IMR-90 (cell line): ENCODE measurements at regions of chr11 and their contacts with region 1.

Region 1: DNA sequence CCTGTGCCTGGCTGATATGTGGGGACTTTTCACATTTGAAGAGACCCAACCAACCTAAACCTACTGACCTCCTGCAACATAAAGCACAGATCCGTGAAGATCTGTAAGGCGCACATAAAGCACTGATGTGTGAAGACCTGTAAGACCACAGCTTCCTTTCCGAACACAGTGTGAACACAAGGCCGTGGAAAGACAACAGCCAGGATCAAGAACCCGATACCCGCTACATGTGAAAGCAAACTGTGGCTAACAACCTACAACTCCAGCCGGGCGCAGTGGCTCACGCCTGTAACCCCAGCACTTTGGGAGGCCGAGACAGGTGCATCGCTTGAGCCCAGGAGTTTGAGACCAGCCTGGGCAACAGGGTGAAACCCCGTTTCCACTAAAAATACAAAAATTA is 17.6 kb upstream of the PPFIA1 start:
- DNase-seq: no peak
- ATAC-seq: no peak
- H3K4me3 ChIP-seq: no peak overlapping the region
- H3K27ac ChIP-seq: no peak overlapping the region
- H3K4me1 ChIP-seq: peaks cover 2% of the 10 kb centered on the region; the same call in 1 of the 2 replicates
- H3K27me3 ChIP-seq: peaks cover 16% of the 10 kb centered on the region
- CTCF ChIP-seq: no peak
- POLR2A ChIP-seq: no peak
- RAD21 ChIP-seq: no peak

Region 2: DNA sequence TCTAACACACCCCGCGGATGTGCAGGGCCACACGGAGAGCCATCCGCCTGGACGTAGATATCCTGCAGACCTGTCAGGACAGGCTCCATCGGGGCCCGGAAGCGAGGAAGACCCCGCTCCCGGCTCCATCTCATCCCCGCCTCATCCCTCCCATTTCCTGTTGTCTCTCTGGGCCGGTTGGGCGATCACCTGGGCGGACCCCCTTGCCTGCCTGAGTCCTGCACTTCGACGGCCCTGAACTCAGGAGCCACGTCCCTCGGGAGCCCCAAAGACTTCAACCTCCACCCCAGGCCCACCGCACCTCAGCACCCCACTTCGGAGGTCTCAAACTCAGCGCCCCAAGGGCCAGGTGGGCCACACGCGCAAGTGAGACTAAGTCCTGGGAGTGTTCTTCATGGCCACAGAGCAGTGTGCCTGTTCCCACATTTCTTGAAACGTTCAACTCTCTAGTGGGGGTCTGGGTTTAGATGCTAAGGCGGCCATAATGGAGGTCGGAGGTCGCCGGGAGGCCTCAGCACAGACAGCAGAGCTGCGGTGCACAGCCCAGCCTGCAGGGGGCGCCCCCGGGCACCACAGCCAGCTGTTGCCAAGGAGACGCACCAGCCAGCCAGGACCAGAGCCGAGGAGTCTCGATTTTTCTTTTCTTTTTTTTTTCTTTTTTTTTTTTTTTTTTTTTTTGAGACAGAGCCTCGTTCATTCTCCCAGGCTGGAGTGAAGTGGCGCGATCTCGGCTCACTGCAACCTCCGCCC is 75.7 kb before region 1 on chr11:
- CTCF ChIA-PET with region 1: no interaction called
- POLR2A ChIA-PET with region 1: no interaction called
- dilution Hi-C with region 1: no loop called
- in situ Hi-C with region 1: no loop called
- intact Hi-C with region 1: no loop called
- DNase-seq: no peak
- ATAC-seq: no peak
- H3K4me3 ChIP-seq: no peak overlapping the region
- H3K27ac ChIP-seq: no peak overlapping the region
- H3K4me1 ChIP-seq: no peaks in the 10 kb centered on the region
- H3K27me3 ChIP-seq: no peaks in the 10 kb centered on the region
- CTCF ChIP-seq: peak; percentile 58
- POLR2A ChIP-seq: no peak
- RAD21 ChIP-seq: no peak

Region 3: DNA sequence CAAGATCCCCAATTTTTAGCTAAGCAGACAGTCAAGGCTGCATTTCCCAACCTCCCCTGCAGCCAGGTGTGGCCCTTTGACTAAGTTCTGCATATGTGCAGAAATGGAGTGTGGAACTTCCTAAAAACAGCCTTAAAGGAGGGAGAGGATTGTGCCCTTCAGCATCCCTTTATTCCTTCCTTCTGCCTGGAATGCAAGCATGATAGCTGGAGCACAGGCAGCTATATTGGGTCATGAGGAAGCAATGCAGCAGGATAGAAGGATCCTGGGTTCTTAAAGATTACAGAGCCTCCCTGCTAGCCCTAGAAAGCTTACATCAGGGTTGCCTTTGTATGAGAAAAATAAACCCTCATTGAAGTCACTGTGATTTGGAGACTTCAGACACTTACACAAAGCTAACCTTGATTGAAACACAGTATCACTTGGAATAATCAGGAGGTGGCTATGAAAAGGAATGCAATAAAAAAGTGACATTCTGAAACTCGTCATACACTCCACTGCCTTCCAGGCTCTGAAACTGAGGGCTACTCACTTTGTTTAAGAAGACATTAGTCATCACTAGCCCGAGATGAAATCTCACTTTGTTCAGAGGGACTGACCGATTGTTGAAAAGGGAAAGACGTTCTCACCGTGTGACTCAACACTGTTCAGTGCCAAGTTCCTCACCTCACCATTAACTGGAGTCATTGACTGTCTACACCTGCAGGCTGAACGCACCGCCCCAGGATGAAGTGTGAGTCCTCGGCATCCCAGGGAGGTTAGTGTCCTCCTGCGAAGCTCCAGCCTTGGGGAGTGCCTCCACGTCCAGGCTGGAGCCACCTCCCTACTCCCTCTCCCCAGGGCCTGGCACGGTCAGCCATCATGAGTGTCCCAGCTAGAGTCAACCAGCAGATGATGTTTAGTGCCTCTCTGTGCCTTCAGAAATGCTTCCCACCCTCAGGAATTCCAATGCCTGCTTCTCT is 19.5 kb before region 1 on chr11:
- CTCF ChIA-PET with region 1: no interaction called
- POLR2A ChIA-PET with region 1: interaction called, 18 read pairs
- dilution Hi-C with region 1: no loop called
- in situ Hi-C with region 1: no loop called
- intact Hi-C with region 1: no loop called
- DNase-seq: peak; percentile 91
- ATAC-seq: peak; percentile 86
- H3K4me3 ChIP-seq: no peak overlapping the region
- H3K27ac ChIP-seq: no peak overlapping the region
- H3K4me1 ChIP-seq: 0 out of 2 replicates have a peak, but pooled peaks cover 2% of the 10 kb centered on the region
- H3K27me3 ChIP-seq: peaks cover 30% of the 10 kb centered on the region
- CTCF ChIP-seq: no peak
- POLR2A ChIP-seq: no peak
- RAD21 ChIP-seq: no peak